ENCODE measurements at regions of chr2 and their contacts with region 1.

Region 1: GRCh38 chr2:241355983-241356870 is at the start of gene FARP2:
- DNase-seq: peak; percentile 100
- H3K4me3 ChIP-seq: peak within 1 kb of the TSS; percentile 65 to 95 (median 78)
- H3K27ac ChIP-seq: peak within 1 kb of the TSS; percentile 83 to 98 (median 90)
- H3K4me1 ChIP-seq: peaks cover 20 to 49% (median 43%) of the 10 kb centered on the region in 6 donors
- H3K27me3 ChIP-seq: no peaks in the 10 kb centered on the region
- CTCF ChIP-seq: no peak
- POLR2A ChIP-seq: peak in 1 of 3 donors; percentile 82
- total RNA-seq, gene FARP2: 30.9 to 72.8 (median 61.5) TPM

Region 2: DNA sequence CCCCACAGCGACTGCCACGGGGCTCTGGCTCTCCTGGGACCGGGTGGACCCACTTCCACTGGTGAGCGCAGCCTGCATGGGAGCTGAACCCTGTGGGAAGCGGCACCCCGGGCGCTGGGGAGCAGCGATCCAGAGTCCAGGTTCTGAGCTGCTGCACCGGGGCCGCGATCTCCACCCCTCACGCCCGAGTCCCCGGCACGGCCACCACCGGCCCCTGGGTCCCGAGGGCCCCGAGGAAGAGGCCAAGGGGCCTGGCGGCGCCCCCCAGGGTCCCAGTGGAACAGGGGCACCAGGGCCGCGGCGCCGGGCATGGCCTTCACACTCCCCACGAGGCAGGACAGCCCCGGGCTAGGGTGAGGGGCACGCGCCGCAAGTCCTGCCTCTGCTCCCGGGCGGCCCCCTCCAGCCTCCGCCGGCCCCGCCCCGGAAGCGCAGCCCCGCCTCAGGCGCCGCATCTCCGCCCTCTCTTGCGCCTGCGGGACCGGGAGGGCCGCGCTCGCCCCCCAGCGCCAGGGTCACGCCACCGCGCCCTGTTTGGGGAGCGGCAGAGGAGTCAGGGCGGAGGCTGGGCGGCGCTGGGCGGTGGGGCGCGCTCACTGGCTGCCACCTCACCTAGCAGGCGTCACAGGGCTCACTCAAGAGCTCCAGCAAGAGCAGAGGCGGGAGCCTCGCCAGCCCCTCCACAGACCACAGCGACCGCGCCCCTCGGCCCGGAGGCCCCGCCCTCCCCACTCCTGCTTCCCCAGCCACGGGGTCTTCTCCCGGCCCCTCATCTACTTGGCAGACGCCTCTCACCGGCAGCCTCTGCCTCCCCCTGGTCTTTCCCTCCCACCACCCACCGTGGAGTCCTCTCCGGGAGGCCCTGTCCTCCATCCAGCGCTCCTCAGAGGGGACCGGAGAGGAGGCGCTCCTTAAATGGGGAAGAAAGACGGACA is 253.9 kb after region 1 on chr2:
- intact Hi-C with region 1: loop called (anchors 5 kb)
- DNase-seq: peak; percentile 96
- H3K4me3 ChIP-seq: peak overlapping the region; percentile 43 to 72 (median 50)
- H3K27ac ChIP-seq: peak overlapping the region in 7 of 8 donors; percentile 46 to 79 (median 65)
- H3K4me1 ChIP-seq: peaks cover 4 to 33% (median 23%) of the 10 kb centered on the region in 6 donors
- H3K27me3 ChIP-seq: no peaks in the 10 kb centered on the region
- CTCF ChIP-seq: peak; percentile 22 to 89 (median 80)
- POLR2A ChIP-seq: no peak